Activated CD4-positive, alpha-beta T cell treated with anti-CD3 and anti-CD28 coated beads for 36 hours (primary cell): ENCODE measurements at regions of chr1 and their contacts with region 1.

Region 1: DNA sequence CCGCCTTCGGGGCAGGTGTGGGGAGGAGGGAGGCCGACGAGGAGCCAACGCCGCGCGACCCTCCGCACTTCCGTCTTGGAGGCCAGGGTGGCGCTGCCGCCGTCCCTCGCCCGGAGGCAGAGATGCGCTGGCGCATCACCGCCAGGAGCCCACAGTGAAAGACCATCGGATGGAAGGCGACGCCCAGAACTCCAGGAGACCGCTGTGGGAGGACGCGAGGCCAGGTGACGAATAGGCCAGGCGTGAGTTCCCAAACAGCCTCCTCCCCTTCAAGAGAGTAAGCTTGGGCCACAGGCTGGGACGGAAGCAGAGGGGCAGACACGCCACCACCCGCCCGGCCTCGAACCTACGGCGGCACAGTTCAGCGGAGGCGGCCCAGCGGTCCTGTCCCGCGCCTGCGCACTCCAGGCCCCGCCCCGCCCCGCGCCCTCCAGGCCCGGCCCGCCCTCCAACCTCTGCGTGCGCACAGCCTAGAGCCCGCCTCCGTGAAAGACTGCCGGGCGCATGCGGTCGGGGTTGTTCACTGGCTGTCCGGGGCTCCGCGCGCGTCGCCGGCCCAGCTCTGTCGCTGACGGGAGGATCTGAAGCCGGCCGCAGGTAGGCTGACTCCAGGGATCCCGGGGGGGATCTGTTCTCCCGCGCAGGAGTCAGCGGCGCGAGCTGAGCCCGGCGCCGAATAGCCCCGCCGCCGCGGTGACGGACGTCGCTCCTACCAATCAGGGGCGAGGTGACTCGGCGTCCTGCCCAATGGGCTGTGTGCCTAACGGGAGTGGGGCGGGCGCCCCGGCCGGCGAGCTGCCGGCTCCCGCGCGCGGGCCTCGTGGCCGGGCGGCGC is at the start of gene CTPS1:
- DNase-seq: peak; percentile 98
- ATAC-seq: peak; percentile 86
- H3K4me3 Mint-ChIP-seq: peak within 1 kb of the TSS; percentile 86
- H3K27ac Mint-ChIP-seq: peak within 1 kb of the TSS; percentile 95
- H3K4me1 Mint-ChIP-seq: peaks cover 47% of the 10 kb centered on the region
- H3K27me3 Mint-ChIP-seq: no peaks in the 10 kb centered on the region
- total RNA-seq, gene CTPS1: 89.5 to 106 TPM

Region 2: DNA sequence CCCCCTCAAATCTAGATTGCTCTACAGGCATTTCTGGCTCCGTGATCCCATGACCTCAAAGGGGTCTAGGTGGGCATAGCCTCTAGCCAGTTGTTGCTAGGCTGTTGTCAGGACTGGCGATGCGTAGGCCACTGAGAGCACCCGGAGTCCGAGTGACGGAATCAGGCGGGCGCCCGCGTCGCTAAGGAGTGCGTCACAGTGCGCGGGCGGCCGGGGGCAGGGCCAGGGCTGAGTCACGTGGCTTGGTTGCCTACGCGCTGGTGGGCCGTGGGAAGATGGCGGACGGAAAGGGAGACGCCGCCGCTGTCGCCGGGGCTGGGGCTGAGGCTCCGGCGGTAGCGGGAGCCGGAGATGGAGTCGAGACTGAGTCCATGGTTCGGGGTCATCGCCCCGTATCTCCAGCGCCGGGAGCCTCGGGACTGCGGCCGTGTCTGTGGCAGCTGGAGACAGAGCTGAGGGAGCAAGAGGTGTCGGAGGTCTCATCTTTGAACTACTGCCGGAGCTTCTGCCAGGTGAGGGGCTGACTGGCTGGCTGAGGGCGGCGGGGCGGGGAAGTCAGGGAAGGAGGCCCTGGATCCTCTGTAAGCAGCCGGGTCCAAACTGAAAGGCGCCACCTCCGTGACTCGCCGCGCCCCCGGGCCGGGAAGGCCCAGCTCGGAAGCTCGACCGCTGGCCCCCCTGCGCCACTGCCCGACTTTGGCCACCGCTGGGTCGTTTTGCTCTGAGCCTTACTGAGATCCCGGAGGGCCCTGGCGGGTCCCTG is 818.1 kb before region 1 on chr1 and contains the start of gene RLF:
- CTCF ChIA-PET with region 1: no interaction called
- POLR2A ChIA-PET with region 1: no interaction called
- intact Hi-C with region 1: loop called in 1 of 2 experiments (anchors 5 kb)
- DNase-seq: peak; percentile 98
- ATAC-seq: peak; percentile 81
- H3K4me3 Mint-ChIP-seq: no peak within 1 kb of the TSS
- H3K27ac Mint-ChIP-seq: no peak within 1 kb of the TSS
- H3K4me1 Mint-ChIP-seq: peaks cover 4% of the 10 kb centered on the region
- H3K27me3 Mint-ChIP-seq: no peaks in the 10 kb centered on the region
- total RNA-seq, gene RLF: 20.1 to 20.9 TPM

Region 3: GRCh38 chr1:40691538-40692428 is 287.7 kb before region 1 on chr1 and contains the start of gene NFYC:
- CTCF ChIA-PET with region 1: interaction called, 5 read pairs
- POLR2A ChIA-PET with region 1: interaction called, 8 read pairs
- intact Hi-C with region 1: loop called (anchors 1 to 2 kb)
- DNase-seq: peak; percentile 98
- ATAC-seq: peak; percentile 87
- H3K4me3 Mint-ChIP-seq: peak within 1 kb of the TSS; percentile 100
- H3K27ac Mint-ChIP-seq: peak within 1 kb of the TSS; percentile 97
- H3K4me1 Mint-ChIP-seq: peaks cover 56% of the 10 kb centered on the region
- H3K27me3 Mint-ChIP-seq: no peaks in the 10 kb centered on the region
- total RNA-seq, gene NFYC: 53.6 to 85.4 TPM

Region 4: DNA sequence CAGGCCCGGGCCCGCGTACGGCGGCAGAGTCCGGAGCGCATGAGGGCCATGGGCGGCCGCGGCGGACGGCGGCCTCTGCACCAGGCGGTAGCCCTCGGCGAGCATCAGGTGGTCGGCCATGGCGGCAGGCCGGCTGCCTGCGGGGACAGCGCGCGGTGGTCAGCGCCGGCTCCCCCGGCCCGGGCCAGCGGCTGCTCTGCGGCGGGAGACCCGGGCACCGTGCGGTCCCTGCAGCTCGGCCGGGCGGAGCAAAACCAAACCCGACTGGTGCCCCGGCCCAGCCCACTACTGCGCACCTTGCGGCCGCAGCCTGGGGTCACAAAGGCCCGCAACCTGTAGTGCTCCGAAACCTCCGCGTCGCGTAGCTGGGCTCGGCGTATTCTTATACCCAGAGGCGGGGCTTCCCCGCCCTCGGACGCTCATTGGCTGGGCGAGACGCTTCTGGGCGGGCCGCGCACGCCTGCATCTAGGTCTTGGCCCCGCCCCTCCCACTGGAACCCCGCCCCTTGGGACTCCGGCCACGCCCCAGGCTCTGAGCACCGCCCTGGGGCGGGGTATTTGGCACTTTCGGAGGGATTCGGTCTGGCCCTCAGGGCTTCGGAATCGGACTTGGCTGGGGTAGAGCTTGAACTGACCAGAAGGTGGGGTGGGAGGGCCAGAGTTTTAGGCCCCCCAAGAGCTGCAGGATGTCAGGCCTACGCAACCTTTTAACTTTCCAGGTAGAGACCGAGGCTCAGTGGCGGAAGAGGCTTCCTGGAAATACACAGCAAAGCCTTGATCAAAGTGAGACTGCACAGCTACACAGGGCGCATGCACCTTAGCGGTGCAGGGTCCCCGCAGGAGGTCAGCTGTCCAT is 117.2 kb before region 1 on chr1 and contains the start of gene CITED4:
- CTCF ChIA-PET with region 1: no interaction called
- POLR2A ChIA-PET with region 1: no interaction called
- intact Hi-C with region 1: loop called in 1 of 2 experiments (anchors 1 kb)
- DNase-seq: peak; percentile 97
- ATAC-seq: peak; percentile 98
- H3K4me3 Mint-ChIP-seq: peak within 1 kb of the TSS; percentile 84
- H3K27ac Mint-ChIP-seq: peak within 1 kb of the TSS; percentile 96
- H3K4me1 Mint-ChIP-seq: peaks cover 11% of the 10 kb centered on the region
- H3K27me3 Mint-ChIP-seq: peaks cover 11% of the 10 kb centered on the region
- total RNA-seq, gene CITED4: 1.6 to 3.0 TPM

Region 5: GRCh38 chr1:41014871-41015270 is 35.4 kb after region 1 on chr1:
- CTCF ChIA-PET with region 1: interaction called, 3 read pairs
- POLR2A ChIA-PET with region 1: no interaction called
- intact Hi-C with region 1: loop called in 1 of 2 experiments (anchors 5 kb)
- DNase-seq: no peak
- ATAC-seq: no peak
- H3K4me3 Mint-ChIP-seq: no peak overlapping the region
- H3K27ac Mint-ChIP-seq: no peak overlapping the region
- H3K4me1 Mint-ChIP-seq: no peaks in the 10 kb centered on the region
- H3K27me3 Mint-ChIP-seq: no peaks in the 10 kb centered on the region

Region 6: GRCh38 chr1:42456010-42456758 is 1476.7 kb after region 1 on chr1 and contains the starts of genes PPCS and ZMYND12:
- CTCF ChIA-PET with region 1: no interaction called
- POLR2A ChIA-PET with region 1: no interaction called
- intact Hi-C with region 1: loop called in 1 of 2 experiments (anchors 5 kb)
- DNase-seq: peak; percentile 97
- ATAC-seq: peak; percentile 92
- H3K4me3 Mint-ChIP-seq: peak within 1 kb of the TSS; percentile 80
- H3K27ac Mint-ChIP-seq: peak within 1 kb of the TSS; percentile 99
- H3K4me1 Mint-ChIP-seq: peaks cover 27% of the 10 kb centered on the region
- H3K27me3 Mint-ChIP-seq: no peaks in the 10 kb centered on the region
- total RNA-seq, gene PPCS: 47.3 to 47.6 TPM
- total RNA-seq, gene ZMYND12: 0.64 to 1.6 TPM